Right cardiac atrium (tissue), 5 donors: ENCODE measurements at regions of chr2 and their contacts with region 1.

Region 1: GRCh38 chr2:239934571-239935171 is 90.5 kb downstream of the NDUFA10 start:
- DNase-seq: peak; percentile 67 to 83 (median 71)
- ATAC-seq: peak; percentile 56 to 57
- H3K4me3 ChIP-seq: no peak overlapping the region
- H3K27ac ChIP-seq: no peak overlapping the region
- H3K4me1 ChIP-seq: peaks cover 1% of the 10 kb centered on the region
- H3K27me3 ChIP-seq: no peaks in the 10 kb centered on the region

Region 2: DNA sequence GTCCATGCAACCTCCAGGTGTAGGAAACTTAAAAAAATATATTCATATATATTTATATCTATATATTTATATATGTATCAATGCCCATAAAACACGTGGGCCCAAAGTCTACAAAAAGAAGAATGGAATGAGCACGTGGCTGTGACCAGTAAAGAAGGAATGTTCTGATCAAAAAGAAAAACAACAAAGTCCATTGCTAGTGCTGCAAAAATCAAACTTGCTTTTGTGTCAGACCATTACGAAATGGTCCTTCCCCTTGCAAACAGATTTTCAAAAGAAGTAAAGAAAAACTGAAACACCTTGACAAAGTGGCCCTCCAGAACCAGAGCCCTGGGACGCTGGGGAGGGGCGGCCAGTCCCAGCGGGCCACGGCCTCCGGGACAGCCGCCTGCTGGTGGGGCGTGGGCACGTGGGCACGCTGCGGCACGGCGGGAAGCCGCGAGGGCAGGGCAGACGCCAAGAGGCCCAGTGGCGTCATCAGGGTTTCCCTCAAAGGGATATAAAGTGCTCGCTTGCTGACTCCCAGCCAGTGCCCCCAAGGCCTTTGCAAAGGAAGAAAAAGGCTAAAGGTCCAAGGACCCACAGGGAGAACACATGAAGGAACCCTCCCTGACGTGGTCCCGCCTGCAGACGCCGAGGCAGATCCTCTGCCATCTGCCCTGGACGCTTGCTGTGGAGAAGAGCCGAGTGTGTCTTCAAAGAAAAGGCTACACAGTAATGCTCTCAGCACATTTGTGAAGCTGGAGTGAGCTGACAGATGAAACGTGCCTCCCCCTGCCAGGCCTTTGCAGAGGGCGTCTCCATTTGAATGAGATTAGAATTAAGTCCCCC is 885.0 kb before region 1 on chr2:
- intact Hi-C with region 1: no loop called
- DNase-seq: peak in 1 of 3 donors; percentile 11
- ATAC-seq: no peak
- H3K4me3 ChIP-seq: no peak overlapping the region
- H3K27ac ChIP-seq: no peak overlapping the region
- H3K4me1 ChIP-seq: no peaks in the 10 kb centered on the region
- H3K27me3 ChIP-seq: no peaks in the 10 kb centered on the region

Region 3: DNA sequence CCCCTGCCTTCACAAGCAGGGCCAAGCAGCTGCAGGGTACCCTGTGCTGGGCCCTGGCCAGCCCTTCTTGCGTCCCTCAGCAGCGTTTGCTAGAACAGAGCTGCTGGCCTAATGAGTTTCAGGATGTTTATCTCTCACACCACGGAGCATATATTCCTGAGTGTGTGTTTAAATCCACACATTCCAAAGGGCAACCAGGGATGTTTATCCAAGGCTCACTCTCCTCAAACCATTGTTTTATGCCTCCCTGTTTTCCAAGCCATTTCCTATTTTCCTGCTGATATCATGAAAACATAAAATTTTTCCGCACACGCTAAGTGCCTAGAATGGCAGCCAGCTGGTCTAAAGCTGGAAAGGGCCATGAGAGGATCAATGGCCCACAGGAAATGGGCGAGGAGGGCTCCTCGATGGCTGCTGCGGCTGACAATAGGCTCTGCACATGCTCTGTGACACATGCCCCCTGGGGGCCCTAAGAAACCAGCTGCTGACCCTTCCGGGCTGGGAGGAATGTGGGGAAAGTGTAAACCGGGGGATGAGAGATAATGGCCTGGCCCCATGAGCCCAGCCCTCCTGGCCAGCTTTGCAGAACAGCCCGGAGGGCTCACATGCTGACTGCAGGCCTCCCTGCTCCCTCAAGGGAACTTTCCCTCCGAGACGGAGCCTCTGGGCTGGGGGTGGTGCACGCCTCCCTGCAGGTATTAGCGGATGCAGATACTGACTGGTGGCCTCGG is 103.5 kb before region 1 on chr2:
- intact Hi-C with region 1: no loop called
- DNase-seq: no peak
- ATAC-seq: peak; percentile 36 to 61
- H3K4me3 ChIP-seq: no peak overlapping the region
- H3K27ac ChIP-seq: no peak overlapping the region
- H3K4me1 ChIP-seq: no peaks in the 10 kb centered on the region
- H3K27me3 ChIP-seq: no peaks in the 10 kb centered on the region

Region 4: GRCh38 chr2:239979243-239980023 is 44.8 kb after region 1 on chr2:
- intact Hi-C with region 1: loop called in 1 of 4 experiments (anchors 10 kb)
- DNase-seq: peak in 1 of 3 donors; percentile 60
- ATAC-seq: peak in 1 of 2 donors; percentile 41
- H3K4me3 ChIP-seq: no peak overlapping the region
- H3K27ac ChIP-seq: no peak overlapping the region
- H3K4me1 ChIP-seq: no peaks in the 10 kb centered on the region
- H3K27me3 ChIP-seq: no peaks in the 10 kb centered on the region

Region 5: GRCh38 chr2:239991689-239992314 is 57.1 kb after region 1 on chr2:
- intact Hi-C with region 1: loop called in 2 of 4 experiments (anchors 2 to 10 kb)
- DNase-seq: no peak
- ATAC-seq: peak in 1 of 2 donors; percentile 61
- H3K4me3 ChIP-seq: no peak overlapping the region
- H3K27ac ChIP-seq: no peak overlapping the region
- H3K4me1 ChIP-seq: no peaks in the 10 kb centered on the region
- H3K27me3 ChIP-seq: no peaks in the 10 kb centered on the region